ENCODE measurements at regions of chr3 and their contacts with region 1.

Region 1: GRCh38 chr3:160038862-160039562 is 50.4 kb downstream of the IL12A start:
- DNase-seq: no peak
- ATAC-seq: peak; percentile 32

Region 2: DNA sequence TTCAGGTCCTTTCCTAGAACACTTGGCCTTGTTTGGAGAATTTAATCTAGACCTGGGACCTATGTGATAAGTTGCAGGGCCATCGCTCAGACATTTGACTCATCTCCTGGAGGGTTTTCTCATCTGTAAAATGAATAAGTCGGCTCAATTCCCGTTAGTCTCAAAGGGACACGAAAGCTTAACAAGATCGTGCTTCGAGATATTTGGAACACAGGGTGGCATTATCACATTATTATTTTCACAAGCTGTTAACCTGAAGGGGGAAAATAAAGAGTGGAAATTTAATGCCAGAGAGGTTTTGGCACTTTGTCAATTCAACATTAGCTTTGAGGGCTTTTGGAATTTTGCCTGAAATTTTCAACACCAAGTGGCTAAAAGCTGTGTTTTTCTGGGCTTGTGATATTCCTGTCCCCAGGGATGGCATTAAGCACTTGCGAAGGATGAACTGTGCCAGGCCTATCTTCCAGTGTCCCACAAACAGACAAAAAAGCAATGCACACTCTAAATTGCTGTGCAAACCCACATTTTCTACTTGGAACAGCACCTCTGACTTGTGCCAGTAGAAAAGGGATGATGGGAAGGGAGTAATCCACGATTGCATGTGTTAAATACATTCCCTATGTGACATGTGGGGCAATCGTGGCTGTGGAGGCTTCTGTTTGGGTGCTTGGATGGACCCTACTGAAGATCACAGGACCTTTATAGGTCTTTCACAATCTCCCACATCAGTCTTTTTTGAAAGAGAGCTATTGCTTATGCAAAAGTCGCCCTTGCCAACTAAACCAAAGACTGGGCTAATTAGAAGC is 758.4 kb before region 1 on chr3:
- intact Hi-C with region 1: no loop called
- DNase-seq: no peak
- ATAC-seq: no peak

Region 3: DNA sequence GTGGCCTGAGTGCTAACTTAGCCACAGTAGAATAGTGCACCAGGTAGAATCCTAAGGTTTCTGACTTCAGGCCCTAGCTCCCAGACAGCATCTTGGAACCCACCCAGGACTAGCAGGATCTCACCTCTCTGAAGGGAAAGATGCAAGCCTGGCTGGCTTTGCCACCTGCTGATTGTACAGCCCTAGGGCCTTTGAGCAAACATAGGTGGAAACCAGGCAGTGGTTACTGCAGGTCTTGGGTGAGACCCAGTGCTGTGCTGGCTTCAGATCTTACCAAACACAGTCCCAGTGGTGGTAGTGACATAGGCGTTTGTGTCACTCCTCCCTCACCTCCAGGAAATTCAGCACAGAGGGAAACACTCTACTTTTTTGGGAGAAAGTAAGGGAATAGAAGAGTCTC is 634.4 kb before region 1 on chr3:
- intact Hi-C with region 1: no loop called
- DNase-seq: no peak
- ATAC-seq: no peak

Region 4: DNA sequence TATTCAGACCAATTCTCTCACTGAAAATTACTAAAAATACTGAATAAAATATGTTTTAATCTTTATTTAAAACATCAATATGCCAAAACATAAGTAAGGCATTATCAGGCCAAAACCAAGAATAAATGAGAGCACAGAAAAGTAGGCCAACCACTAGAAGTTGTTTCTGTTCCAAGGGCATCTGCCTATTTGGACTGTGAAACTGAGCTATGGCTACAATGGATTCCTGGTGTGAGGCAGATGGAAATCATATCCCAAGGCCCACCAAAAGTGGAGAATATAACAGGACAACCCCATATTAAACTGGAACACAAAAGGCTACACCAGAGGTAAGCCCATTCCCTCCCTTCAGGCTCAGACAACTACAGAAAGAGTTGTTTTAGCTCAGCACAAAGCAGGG is 353.2 kb before region 1 on chr3:
- intact Hi-C with region 1: no loop called
- DNase-seq: no peak
- ATAC-seq: no peak

Region 5: DNA sequence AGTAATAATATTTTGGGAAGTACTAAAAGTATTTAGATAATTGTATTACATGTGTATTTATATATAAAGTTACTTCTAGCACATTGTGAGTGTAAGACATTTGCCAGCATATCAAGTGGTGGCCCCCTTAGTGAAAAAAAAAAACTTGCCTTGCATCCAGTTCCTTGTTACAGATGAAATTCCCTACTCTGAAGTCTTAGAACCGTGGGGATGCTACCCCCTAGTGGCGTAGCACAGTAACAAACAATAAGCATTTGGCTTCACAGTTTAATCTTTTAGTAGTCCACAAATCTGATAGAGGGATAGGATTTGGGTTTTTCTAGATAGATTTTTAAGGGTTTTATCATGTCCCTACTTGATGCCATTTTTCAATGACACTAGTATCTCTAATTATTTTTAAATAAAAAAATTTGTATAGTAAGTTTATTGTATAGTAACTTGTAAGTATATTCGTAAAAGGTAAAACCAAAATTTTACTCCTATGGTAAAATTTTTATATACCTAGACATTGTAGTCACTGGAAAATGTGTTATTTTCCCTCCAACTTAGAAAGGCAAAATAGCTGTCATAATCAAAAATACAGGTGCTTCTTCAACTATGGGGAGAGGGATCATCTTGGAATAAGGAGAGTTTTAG is 374.7 kb after region 1 on chr3:
- intact Hi-C with region 1: loop called (anchors 10 kb)
- DNase-seq: peak; percentile 69
- ATAC-seq: peak; percentile 71

Measured in sciatic nerve (tissue), 2 donors.